ENCODE measurements at regions of chr11 and their contacts with region 1.

Region 1: GRCh38 chr11:134068829-134069425 is at the start of gene JAM3:
- DNase-seq: peak; percentile 90
- H3K4me3 ChIP-seq: peak within 1 kb of the TSS; percentile 63 to 65
- H3K27ac ChIP-seq: peak within 1 kb of the TSS; percentile 77 to 82
- H3K4me1 ChIP-seq: no peaks in the 10 kb centered on the region
- H3K27me3 ChIP-seq: no peaks in the 10 kb centered on the region
- CTCF ChIP-seq: no peak
- POLR2A ChIP-seq: peak; percentile 75
- total RNA-seq, gene JAM3: 21.3 to 157 TPM

Region 2: GRCh38 chr11:134124660-134125451 is 55.9 kb after region 1 on chr11:
- intact Hi-C with region 1: loop called (anchors 5 kb)
- DNase-seq: peak; percentile 57
- H3K4me3 ChIP-seq: peak overlapping the region; percentile 17 to 36
- H3K27ac ChIP-seq: peak overlapping the region in 1 of 2 donors; percentile 29
- H3K4me1 ChIP-seq: peaks cover 2% of the 10 kb centered on the region
- H3K27me3 ChIP-seq: no peaks in the 10 kb centered on the region
- CTCF ChIP-seq: peak in 1 of 4 experiments; percentile 36
- POLR2A ChIP-seq: no peak

Region 3: GRCh38 chr11:134275534-134276395 is 206.8 kb after region 1 on chr11 and contains the start of gene GLB1L3:
- intact Hi-C with region 1: no loop called
- DNase-seq: peak; percentile 32
- H3K4me3 ChIP-seq: peak within 1 kb of the TSS; percentile 42
- H3K27ac ChIP-seq: peak within 1 kb of the TSS; percentile 66 to 86
- H3K4me1 ChIP-seq: no peaks in the 10 kb centered on the region
- H3K27me3 ChIP-seq: no peaks in the 10 kb centered on the region
- CTCF ChIP-seq: peak in 1 of 4 experiments; percentile 19
- POLR2A ChIP-seq: no peak
- total RNA-seq, gene GLB1L3: 7.8 to 14.5 TPM

Measured in prostate gland (tissue), 2 donors.